ENCODE measurements at regions of chr7 and their contacts with region 1.

Region 1: DNA sequence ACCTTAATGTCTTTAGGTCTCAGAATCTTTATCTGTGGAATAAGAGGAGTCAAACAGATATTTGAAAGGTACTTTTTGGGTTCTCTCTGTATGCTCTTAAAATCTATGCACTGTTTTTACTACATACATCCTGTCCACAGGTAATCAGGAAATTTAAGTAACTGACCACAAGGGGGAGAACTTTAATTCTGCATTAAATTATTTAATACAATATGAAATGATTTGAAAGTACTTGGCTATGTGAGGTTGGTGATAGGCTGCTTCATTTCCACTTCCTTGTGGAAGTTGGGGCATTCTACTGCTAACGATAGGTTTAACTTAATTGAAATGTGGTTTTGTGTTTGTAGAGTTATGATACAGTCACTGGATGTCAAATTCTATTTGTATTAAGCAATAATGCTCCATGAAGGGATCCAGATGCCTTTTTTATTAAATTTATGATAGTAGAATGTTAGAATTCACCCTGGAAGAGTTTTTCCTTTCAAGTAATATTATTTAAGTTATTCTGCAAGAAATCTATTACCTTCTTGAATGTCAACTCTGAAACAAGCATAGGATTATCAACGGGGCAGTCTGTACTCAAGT is 6.0 kb downstream of the TEX47 start:
- DNase-seq: no peak
- ATAC-seq: peak; percentile 66
- H3K4me3 ChIP-seq: no peak overlapping the region
- H3K27ac ChIP-seq: no peak overlapping the region
- H3K4me1 ChIP-seq: no peaks in the 10 kb centered on the region
- H3K27me3 ChIP-seq: no peaks in the 10 kb centered on the region
- CTCF ChIP-seq: peak in 2 of 3 experiments; percentile 15 to 30; a peak in 1 of 6 replicates
- EP300 ChIP-seq: no peak
- POLR2A ChIP-seq: no peak
- RAD21 ChIP-seq: 0 out of 2 replicates have a peak, but pooled peaks have one; percentile 21

Region 2: GRCh38 chr7:90119178-90119971 is 1329.8 kb after region 1 on chr7:
- CTCF ChIA-PET with region 1: no interaction called
- POLR2A ChIA-PET with region 1: no interaction called
- RAD21 ChIA-PET with region 1: no interaction called
- SMC1A ChIA-PET with region 1: no interaction called
- in situ Hi-C with region 1: loop called (anchors 25 kb)
- intact Hi-C with region 1: no loop called
- DNase-seq: no peak
- ATAC-seq: peak; percentile 45
- H3K4me3 ChIP-seq: no peak overlapping the region
- H3K27ac ChIP-seq: no peak overlapping the region
- H3K4me1 ChIP-seq: no peaks in the 10 kb centered on the region
- H3K27me3 ChIP-seq: peaks cover 0 to 3% of the 10 kb centered on the region in 2 experiments; a peak in 2 of 4 replicates
- CTCF ChIP-seq: no peak
- EP300 ChIP-seq: no peak
- POLR2A ChIP-seq: no peak
- RAD21 ChIP-seq: no peak

Measured in GM12878 (cell line).